Common myeloid progenitor, CD34-positive (primary cell): ENCODE measurements at regions of chr15 and their contacts with region 1.

Region 1: DNA sequence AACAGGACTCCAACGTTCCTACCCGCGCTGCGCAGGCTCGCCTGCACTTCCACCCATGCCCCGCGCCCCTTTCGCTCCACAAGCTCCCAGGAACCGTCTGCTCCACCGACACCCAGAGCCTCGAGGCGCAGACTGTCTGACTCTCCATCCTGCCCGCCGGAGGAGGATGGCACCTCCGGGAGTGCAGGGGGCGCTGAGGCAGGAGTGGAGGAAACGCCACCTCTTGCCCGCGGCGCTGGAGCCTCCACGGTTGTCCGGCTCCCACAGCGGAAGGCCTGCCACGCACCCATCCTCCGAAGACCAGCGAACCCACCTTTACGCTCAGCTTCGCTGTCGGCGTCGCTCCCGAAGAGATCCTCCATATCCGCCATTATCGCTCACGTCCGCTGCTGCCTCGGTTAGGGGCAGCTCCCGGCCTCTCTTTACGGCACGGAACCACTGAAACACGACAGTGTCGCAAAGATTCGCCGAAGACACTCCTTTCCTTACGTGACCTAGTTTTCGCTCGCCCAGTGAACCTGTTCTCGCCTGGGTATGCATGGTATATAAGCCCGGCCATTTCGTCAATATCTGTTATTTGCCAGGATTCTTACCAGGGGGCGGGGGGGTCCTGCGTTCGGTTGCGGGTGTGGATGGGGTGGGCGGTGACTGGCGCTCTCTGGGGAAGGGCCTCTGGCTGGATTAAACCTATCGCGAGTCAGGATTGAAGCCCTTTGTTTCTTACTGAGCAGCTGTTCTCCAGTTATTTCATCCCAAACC is at the start of gene LEO1:
- DNase-seq: peak; percentile 99 to 100 (median 99)
- H3K4me3 ChIP-seq: peak within 1 kb of the TSS; percentile 85 to 99 (median 95)
- H3K27ac ChIP-seq: peak within 1 kb of the TSS; percentile 81 to 94
- H3K4me1 ChIP-seq: peaks cover 0 to 21% (median 11%) of the 10 kb centered on the region in 4 experiments
- H3K27me3 ChIP-seq: no peaks in the 10 kb centered on the region

Region 2: DNA sequence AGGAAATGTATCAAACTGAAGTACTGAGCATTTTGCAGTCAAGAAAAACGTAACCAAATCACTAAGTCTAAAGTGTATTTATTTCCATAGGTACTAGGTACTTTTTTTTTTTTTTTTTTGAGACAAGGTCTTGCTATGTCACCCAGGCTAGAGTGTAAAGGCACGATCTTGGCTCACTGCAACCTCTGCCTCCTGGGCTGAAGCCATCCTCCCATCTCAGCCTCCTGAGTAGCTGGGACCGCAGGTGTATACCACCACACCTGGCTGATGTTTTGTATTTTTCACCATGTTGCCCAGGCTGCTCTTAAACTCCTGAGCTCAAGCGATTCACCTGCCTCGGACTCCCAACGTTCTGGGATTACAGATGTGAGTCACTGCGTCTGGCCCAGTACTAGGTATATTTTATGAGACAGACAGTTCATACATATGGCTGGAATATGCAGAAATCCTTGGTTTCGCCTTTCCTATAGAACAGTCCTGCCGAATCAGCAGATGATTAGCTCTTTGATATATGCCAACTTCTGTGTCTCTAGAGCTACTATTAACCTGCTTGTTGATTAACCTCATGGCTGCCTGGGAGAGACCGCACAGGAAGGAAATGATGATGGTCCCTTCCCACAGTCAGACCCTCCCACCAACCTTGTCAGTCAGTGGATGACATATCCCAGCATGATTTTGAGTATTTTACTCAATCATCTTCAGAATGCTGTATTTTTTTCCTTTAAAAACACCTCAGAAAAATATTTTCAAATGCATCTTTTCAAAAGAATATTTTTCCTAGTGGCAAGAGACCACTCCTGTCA is 109.8 kb before region 1 on chr15:
- CTCF ChIA-PET with region 1: no interaction called
- POLR2A ChIA-PET with region 1: no interaction called
- DNase-seq: peak; percentile 65 to 82 (median 65)
- H3K4me3 ChIP-seq: no peak overlapping the region
- H3K27ac ChIP-seq: peak overlapping the region in 1 of 2 experiments; percentile 26
- H3K4me1 ChIP-seq: peaks cover 4 to 13% (median 8%) of the 10 kb centered on the region in 4 experiments
- H3K27me3 ChIP-seq: no peaks in the 10 kb centered on the region

Region 3: GRCh38 chr15:51917493-51917892 is 54.1 kb before region 1 on chr15:
- CTCF ChIA-PET with region 1: no interaction called
- POLR2A ChIA-PET with region 1: no interaction called
- DNase-seq: peak; percentile 22 to 45 (median 44)
- H3K4me3 ChIP-seq: no peak overlapping the region
- H3K27ac ChIP-seq: no peak overlapping the region
- H3K4me1 ChIP-seq: no peaks in the 10 kb centered on the region
- H3K27me3 ChIP-seq: no peaks in the 10 kb centered on the region

Region 4: GRCh38 chr15:51982013-51982769 is 10.6 kb after region 1 on chr15:
- CTCF ChIA-PET with region 1: interaction called, 15 read pairs
- POLR2A ChIA-PET with region 1: interaction called, 7 read pairs
- DNase-seq: peak; percentile 91 to 96 (median 94)
- H3K4me3 ChIP-seq: peak overlapping the region in 6 of 7 experiments; percentile 37 to 76 (median 57)
- H3K27ac ChIP-seq: peak overlapping the region; percentile 91 to 96
- H3K4me1 ChIP-seq: peaks cover 4 to 21% (median 13%) of the 10 kb centered on the region in 4 experiments
- H3K27me3 ChIP-seq: no peaks in the 10 kb centered on the region